Dorsolateral prefrontal cortex (tissue), 120 donors: ENCODE measurements at regions of chr19 and their contacts with region 1.

Region 1: DNA sequence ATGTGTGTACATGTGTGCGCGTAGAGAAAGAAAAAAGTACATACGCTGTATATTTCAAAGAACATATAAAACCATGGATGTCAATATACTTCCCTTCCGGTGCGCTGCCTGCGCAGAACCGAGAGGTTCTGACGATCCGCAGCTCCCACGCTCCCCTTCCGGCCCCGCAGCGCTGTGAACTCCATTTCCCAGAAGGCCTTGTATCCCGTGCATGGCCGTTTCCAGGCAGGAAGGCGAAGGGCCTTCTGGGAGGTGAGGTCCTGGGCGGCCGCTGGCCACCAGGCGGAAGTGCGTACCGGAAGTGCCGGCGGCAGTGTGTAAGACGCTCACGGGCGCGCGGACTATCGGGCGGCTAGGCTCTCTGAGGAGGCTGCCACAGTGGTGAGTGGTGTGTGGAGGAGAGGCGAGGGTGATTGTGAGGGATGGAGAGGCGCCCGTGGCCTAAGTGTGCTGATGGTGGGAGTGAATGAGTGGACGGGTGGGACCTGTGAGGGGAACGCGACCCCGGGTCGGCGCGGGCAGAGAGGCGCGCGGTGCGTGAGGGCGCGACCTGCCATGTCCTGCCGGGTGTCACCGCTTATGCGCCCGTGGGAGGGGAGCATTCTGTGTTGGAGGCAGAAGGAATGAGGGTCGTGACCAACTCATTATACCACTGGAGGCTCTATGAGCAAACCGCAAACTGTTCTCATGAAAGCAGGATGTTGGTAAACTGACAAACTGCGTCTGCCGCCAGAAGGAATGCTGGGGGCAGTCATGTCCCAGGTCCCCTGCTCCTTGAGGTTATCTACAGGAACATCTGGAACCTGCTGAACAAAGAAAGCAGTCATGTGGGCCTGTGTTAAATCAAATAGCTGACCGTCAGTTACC is at the start of gene ERVK3-1:
- DNase-seq: peak; percentile 95 to 98 (median 98)
- H3K4me3 ChIP-seq: peak within 1 kb of the TSS; percentile 73 to 99 (median 91)
- H3K27ac ChIP-seq: peak within 1 kb of the TSS in 58 of 59 donors; percentile 5 to 96 (median 82)
- H3K27me3 ChIP-seq: no peaks in the 10 kb centered on the region
- CTCF ChIP-seq: peak in 49 of 56 donors; percentile 5 to 67 (median 42)
- total RNA-seq, gene ERVK3-1: 26.9 to 56.2 (median 37.1) TPM

Region 2: GRCh38 chr19:58021541-58022282 is 283.6 kb before region 1 on chr19:
- intact Hi-C with region 1: loop called in 1 of 2 experiments (anchors 10 kb)
- DNase-seq: peak in 4 of 10 donors; percentile 58 to 69 (median 66)
- H3K4me3 ChIP-seq: peak overlapping the region in 3 of 59 donors; percentile 6 to 32 (median 14)
- H3K27ac ChIP-seq: no peak overlapping the region
- H3K27me3 ChIP-seq: no peaks in the 10 kb centered on the region
- CTCF ChIP-seq: peak; percentile 54 to 91 (median 80)

Region 3: DNA sequence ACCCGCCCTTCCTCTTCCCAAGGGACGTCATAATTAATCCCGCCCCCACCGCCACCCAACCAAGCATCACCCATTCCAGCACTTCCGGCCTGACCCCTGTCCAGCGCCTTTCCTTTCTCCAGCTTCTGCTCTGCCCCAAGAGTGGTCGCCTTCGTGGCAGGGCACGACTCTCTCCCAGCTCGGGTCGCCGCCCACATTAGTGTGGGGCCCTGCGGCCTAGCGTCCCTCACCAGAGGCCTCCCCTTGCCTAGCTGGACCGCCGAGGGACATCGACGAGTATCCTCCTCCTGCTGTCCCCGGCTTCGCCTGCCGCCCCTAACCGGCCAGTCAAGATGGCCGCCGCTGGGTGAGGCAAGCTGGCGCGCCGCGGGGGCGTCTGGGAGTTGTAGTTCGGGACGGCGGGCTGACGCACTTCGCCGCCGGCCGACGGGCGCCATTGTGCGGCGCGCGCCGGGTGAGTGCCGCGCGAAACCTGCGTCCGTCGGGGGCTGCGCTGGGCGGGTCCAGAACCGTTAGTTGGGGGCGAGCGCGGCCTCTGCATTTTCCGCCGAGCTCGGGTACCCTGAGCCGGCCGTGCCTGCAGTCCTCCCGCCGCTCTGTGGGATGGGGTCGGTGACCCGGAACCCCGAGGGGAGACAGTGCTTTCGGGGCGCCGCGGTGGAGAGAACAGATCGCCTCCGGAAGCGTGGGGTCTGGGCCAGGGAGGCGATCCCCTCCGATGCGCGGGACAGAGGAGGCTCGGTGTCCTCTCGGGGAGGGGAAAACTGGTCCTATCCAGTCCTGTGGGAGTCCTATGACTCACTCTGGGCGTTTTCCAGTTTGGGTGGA is 122.1 kb before region 1 on chr19 and contains the start of gene ZNF274:
- intact Hi-C with region 1: loop called in 1 of 2 experiments (anchors 10 kb)
- DNase-seq: peak; percentile 83 to 93 (median 90)
- H3K4me3 ChIP-seq: peak within 1 kb of the TSS; percentile 62 to 100 (median 90)
- H3K27ac ChIP-seq: peak within 1 kb of the TSS; percentile 86 to 100 (median 98)
- H3K27me3 ChIP-seq: no peaks in the 10 kb centered on the region
- CTCF ChIP-seq: peak in 19 of 56 donors; percentile 4 to 37 (median 21)
- total RNA-seq, gene ZNF274: 9.8 to 36.6 (median 18.7) TPM

Region 4: GRCh38 chr19:58278157-58279041 is 26.9 kb before region 1 on chr19 and contains the start of gene ZNF8:
- intact Hi-C with region 1: loop called (anchors 1 to 2 kb)
- DNase-seq: peak; percentile 95 to 98 (median 96)
- H3K4me3 ChIP-seq: peak within 1 kb of the TSS; percentile 59 to 99 (median 92)
- H3K27ac ChIP-seq: peak within 1 kb of the TSS; percentile 65 to 97 (median 88)
- H3K27me3 ChIP-seq: no peaks in the 10 kb centered on the region
- CTCF ChIP-seq: peak in 45 of 56 donors; percentile 16 to 64 (median 43)
- total RNA-seq, gene ZNF8: 7.8 to 17.2 (median 10.9) TPM